ENCODE measurements at regions of chr7 and their contacts with region 1.

Region 1: DNA sequence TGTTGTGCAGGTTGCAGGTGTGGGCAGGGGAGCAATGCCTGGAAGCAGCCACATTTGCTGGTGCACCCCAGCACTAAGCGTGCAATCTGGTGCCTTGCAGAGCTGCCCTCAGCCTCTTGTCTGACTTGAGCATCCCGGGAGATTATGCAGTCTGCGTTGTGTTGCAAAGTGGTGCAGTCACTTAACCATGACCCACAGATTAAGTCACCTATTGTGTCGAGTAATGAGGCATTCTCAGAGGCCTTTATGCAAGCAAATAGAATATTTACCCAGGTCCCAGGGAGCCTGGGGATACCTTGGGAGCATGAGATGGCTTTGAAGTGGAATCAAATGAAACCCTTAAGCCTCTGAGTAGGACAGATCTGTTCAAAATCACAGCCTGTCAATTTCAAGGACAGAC is 529.0 kb downstream of the TYW1 start:
- DNase-seq: no peak
- H3K4me3 ChIP-seq: no peak overlapping the region
- H3K27ac ChIP-seq: no peak overlapping the region
- H3K4me1 ChIP-seq: no peaks in the 10 kb centered on the region
- H3K27me3 ChIP-seq: no peaks in the 10 kb centered on the region
- CTCF ChIP-seq: no peak
- EP300 ChIP-seq: no peak
- POLR2A ChIP-seq: no peak

Region 2: DNA sequence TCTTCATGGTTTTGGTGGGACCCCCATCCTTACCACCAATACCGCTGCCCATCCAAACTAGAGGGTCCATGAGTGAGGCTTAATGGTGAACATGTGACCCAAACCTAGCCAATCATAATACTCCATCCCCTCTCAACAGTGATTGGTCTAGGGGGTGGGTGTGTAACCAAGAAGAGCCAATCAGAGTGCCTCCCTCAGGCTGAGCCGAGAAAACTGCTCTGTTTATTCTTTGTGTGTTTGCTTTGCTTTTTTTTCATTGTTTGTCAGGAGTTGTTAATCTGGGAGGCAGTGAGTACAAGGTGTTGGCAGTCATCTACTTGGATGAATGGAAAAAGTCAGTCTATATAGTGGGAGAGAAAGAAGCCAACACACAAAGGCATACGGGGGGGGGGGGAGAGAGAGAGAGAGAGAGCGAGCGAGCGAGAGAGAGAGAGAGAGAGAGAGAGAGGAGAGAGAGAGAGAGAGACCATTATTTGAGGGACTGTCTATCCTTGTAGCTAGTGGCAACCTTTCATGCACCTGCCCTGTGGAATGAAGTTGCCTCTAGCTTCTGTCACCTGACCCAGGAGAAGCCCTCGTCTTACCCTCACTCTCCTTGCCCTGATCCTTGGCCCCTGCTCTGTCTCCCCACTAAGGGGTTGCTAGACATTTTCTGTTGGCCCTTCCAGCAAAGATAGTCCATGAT is 87.2 kb before region 1 on chr7:
- in situ Hi-C with region 1: loop called in 1 of 4 experiments (anchors 25 kb)
- intact Hi-C with region 1: no loop called
- DNase-seq: no peak
- H3K4me3 ChIP-seq: no peak overlapping the region
- H3K27ac ChIP-seq: no peak overlapping the region
- H3K4me1 ChIP-seq: no peaks in the 10 kb centered on the region
- H3K27me3 ChIP-seq: no peaks in the 10 kb centered on the region
- CTCF ChIP-seq: no peak
- EP300 ChIP-seq: no peak
- POLR2A ChIP-seq: no peak